Head of caudate nucleus (tissue), 42 donors: ENCODE measurements at regions of chr1 and their contacts with region 1.

Region 1: GRCh38 chr1:112706908-112707663 is at the start of gene RHOC:
- DNase-seq: peak; percentile 55 to 91 (median 82)

Region 2: GRCh38 chr1:112501810-112502641 is 205.1 kb before region 1 on chr1:
- intact Hi-C with region 1: loop called (anchors 5 kb)
- DNase-seq: peak; percentile 57 to 94 (median 85)

Region 3: DNA sequence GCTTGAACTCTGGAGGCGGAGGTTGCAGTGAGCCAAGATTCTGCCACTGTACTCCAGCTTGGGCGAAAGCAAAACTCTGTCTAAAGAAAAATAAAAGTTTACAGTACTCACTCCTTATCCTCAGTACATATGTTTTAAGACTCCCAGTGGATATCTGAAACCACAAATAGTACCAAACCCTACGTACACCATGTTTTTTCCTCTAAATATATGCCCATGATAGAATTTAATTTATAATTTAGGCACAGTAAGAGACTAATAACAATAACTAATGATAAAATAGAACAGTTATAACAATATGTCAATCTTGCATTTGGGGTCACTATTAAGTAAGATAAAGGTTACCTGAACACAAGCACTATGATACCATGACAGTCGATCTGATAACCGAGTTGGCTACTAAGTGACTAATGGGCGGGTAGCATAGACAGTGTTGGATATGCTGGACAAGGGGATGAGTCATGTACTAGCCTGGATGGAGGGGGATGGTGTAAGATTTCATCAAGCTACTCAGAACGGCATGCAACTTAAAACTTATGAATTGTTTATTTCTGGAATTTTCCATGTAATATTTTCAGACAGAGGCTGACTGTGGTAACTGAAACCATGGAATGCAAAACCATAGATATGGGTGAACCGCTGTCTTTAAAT is 131.8 kb before region 1 on chr1:
- intact Hi-C with region 1: no loop called
- DNase-seq: no peak

Region 4: GRCh38 chr1:112625696-112626095 is 81.4 kb before region 1 on chr1:
- intact Hi-C with region 1: loop called (anchors 2 kb)
- DNase-seq: peak in 12 of 42 donors; percentile 16 to 77 (median 28)